Endothelial cell of umbilical vein (primary cell): ENCODE measurements at regions of chr17 and their contacts with region 1.

Region 1: DNA sequence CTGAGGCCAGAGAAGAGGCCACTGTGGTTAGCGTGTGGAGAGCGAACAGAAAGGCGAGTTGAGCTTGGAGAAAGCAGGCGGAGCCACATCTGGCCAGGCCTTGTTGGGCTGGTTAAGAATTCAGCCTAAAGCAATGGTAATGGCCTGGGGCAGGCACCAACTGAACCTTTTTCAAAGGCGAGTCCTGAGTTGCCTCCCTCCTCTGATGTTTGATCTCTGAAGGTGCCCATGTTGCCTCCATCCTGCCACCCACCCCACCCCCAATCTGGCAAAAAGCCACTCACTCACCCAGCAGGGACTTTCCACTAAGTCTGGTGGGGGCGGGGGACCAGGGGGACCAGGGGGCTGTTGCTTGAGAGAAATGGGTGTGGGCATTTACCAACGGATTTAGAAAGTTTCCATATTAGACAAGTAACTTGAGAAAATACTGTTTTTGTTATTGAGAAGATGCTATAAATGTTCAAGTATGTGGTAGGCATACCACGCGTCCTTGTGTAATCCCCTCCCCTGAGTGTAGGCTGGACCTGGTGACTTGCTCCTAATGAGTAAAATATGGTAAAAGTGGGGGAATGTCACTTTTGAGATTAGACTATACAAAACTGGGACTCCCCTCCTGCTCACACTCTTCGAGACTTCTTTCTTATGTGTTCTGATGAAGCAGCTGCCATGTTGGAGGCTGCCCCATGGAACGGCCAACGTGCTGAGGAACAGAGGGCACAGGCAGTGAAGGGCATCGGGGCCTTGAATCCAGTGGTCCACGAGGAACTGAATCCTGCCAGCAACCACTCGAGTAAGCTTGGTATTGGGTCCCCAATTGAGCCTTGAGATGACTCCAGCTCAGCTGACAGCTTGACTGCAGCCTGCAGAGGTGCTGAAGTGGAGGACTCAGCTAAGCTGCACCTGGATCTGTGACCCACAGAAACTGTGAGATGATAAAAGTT is 29.9 kb upstream of the TNS4 start:
- DNase-seq: no peak
- H3K4me3 ChIP-seq: no peak overlapping the region
- H3K27ac ChIP-seq: no peak overlapping the region
- H3K4me1 ChIP-seq: peaks cover 28% of the 10 kb centered on the region
- H3K27me3 ChIP-seq: peaks cover 12 to 22% of the 10 kb centered on the region in 2 experiments
- CTCF ChIP-seq: no peak
- POLR2A ChIP-seq: no peak

Region 2: GRCh38 chr17:40203131-40203530 is 328.2 kb before region 1 on chr17:
- CTCF ChIA-PET with region 1: interaction called, 10 read pairs
- POLR2A ChIA-PET with region 1: no interaction called
- dilution Hi-C with region 1: no loop called
- intact Hi-C with region 1: no loop called
- DNase-seq: peak; percentile 41
- H3K4me3 ChIP-seq: no peak overlapping the region
- H3K27ac ChIP-seq: no peak overlapping the region
- H3K4me1 ChIP-seq: peaks cover 10% of the 10 kb centered on the region
- H3K27me3 ChIP-seq: peaks cover 0 to 2% of the 10 kb centered on the region in 2 experiments
- CTCF ChIP-seq: no peak
- POLR2A ChIP-seq: no peak

Region 3: GRCh38 chr17:40362696-40363110 is 168.6 kb before region 1 on chr17:
- CTCF ChIA-PET with region 1: interaction called, 161 read pairs
- POLR2A ChIA-PET with region 1: no interaction called
- dilution Hi-C with region 1: no loop called
- intact Hi-C with region 1: loop called (anchors 1 kb)
- DNase-seq: peak; percentile 71
- H3K4me3 ChIP-seq: peak overlapping the region in 1 of 3 experiments; percentile 41
- H3K27ac ChIP-seq: no peak overlapping the region
- H3K4me1 ChIP-seq: peaks cover 7% of the 10 kb centered on the region
- H3K27me3 ChIP-seq: no peaks in the 10 kb centered on the region
- CTCF ChIP-seq: peak; percentile 85 to 88
- POLR2A ChIP-seq: no peak

Region 4: DNA sequence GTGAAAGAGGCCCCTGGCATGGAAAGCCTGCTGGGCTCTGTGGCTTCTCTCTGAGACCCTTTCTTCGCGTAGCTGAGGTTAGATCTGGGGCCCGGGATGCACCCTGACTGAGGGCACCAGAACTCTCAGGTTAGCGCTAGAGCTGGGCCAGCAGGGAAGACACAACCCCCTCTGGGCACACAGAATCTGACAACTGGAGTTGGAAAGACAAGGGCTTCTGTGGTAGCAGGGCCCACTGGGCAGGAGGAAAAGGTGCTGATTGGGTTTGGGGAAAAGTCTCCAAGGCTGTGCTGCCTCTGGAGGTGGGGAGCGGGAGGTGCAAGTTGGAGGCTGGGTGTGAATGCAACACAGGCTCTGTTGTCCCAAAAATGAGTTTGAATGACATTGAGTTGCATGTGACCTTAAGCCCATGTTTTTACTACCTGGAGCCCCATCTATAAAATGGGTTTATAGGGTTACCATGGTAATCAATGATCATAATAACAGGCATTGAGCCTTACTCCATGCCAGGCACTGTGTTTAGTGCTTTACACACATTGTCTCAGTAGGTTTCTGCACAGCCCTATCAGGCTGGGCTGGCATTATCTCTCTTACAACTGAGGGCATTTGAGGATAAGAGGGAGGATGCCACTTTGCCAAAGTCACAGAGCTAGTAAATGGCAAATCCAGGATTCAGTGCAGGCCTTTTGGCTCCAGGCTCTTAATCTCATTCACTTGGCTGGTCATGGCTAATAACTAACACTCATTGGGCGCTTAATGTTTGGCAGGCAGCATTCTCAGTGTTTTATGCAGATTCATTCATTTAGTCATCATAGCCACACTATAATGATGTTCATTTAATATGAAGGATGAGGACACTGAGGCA is 97.5 kb before region 1 on chr17:
- CTCF ChIA-PET with region 1: interaction called, 110 read pairs
- POLR2A ChIA-PET with region 1: no interaction called
- dilution Hi-C with region 1: no loop called
- intact Hi-C with region 1: no loop called
- DNase-seq: no peak
- H3K4me3 ChIP-seq: no peak overlapping the region
- H3K27ac ChIP-seq: no peak overlapping the region
- H3K4me1 ChIP-seq: no peaks in the 10 kb centered on the region
- H3K27me3 ChIP-seq: peaks cover 0 to 2% of the 10 kb centered on the region in 2 experiments
- CTCF ChIP-seq: peak; percentile 38 to 55
- POLR2A ChIP-seq: no peak

Region 5: DNA sequence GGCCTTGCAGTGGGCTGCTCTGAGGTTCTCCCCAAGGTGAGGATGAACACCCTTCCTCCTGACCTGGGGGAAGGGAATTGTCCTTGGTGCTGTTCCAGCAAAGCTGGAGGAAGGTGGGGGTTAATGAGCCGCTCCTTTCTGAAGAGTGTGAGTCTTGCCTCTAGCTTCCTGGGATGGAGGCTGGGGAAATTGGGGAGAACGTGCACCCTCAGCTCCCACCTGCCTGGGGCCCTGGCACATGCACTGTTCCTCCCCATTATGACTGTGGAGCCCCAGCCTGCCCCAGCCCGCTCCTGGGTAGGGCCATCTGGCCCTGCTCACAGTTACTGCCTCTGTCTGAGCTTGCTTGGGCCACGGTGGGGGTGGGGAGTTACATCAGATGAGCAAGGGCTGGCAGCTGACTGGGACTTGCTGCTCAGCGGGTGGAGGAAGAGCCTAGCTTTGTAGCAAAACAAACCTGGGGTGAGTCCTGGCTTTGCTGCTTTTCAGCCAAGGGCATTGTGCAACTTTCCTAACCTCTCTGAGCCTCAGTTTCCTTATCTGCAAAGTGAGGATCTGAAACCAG is 41.0 kb before region 1 on chr17:
- CTCF ChIA-PET with region 1: interaction called, 24 read pairs
- POLR2A ChIA-PET with region 1: no interaction called
- dilution Hi-C with region 1: no loop called
- intact Hi-C with region 1: no loop called
- DNase-seq: no peak
- H3K4me3 ChIP-seq: no peak overlapping the region
- H3K27ac ChIP-seq: no peak overlapping the region
- H3K4me1 ChIP-seq: no peaks in the 10 kb centered on the region
- H3K27me3 ChIP-seq: peaks cover 2 to 6% of the 10 kb centered on the region in 2 experiments
- CTCF ChIP-seq: no peak
- POLR2A ChIP-seq: no peak

Region 6: DNA sequence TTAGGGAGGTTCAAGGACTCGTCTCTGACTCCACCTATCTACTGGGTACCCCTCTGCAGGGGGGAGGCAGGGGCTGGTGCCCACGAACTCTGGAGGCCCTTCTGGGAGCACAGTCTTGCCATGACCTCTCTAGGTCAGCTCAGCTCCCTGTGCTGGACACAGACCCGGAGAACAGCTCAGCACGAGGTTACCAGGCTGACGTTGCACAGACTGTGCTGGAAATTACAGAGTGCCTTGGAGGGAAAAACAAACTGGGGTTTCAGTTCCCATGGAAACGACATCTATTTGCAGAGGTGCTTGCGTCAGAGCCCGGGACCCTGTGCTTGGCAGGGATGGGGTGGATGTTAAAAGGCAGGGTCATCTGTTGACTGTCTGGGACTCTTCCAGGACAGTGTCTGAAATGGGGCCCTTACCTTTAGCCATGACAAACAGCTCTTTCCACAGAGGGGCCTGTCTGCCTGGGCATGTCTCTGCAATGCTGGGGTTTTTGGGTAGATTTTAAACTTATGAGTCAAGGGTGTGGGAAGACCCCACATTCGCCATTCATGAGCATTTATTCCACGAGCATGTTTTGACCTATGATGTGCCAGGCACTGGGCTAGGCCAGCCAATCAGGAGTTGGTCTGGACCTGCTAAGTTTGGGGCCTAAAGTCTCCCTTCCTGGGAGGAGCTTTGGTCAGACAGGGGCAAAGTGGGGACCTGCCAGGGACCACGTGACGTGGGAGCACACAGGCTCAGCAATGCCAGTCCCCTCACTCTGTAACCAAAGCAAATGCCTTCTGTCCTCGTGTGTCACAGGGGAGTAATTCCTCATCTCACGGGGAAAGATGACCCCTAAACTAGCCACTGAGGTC is 11.5 kb after region 1 on chr17:
- CTCF ChIA-PET with region 1: interaction called, 30 read pairs
- POLR2A ChIA-PET with region 1: no interaction called
- dilution Hi-C with region 1: no loop called
- intact Hi-C with region 1: no loop called
- DNase-seq: peak; percentile 67
- H3K4me3 ChIP-seq: no peak overlapping the region
- H3K27ac ChIP-seq: no peak overlapping the region
- H3K4me1 ChIP-seq: peaks cover 5% of the 10 kb centered on the region
- H3K27me3 ChIP-seq: no peaks in the 10 kb centered on the region
- CTCF ChIP-seq: no peak
- POLR2A ChIP-seq: no peak